ENCODE measurements at regions of chr9 and their contacts with region 1.

Region 1: GRCh38 chr9:121557581-121558447 is 58.2 kb upstream of the GGTA1 start:
- DNase-seq: peak; percentile 12
- H3K4me3 Mint-ChIP-seq: no peak overlapping the region
- H3K27ac Mint-ChIP-seq: no peak overlapping the region
- H3K4me1 Mint-ChIP-seq: peaks cover 3% of the 10 kb centered on the region
- H3K27me3 Mint-ChIP-seq: peaks cover 4% of the 10 kb centered on the region

Region 2: DNA sequence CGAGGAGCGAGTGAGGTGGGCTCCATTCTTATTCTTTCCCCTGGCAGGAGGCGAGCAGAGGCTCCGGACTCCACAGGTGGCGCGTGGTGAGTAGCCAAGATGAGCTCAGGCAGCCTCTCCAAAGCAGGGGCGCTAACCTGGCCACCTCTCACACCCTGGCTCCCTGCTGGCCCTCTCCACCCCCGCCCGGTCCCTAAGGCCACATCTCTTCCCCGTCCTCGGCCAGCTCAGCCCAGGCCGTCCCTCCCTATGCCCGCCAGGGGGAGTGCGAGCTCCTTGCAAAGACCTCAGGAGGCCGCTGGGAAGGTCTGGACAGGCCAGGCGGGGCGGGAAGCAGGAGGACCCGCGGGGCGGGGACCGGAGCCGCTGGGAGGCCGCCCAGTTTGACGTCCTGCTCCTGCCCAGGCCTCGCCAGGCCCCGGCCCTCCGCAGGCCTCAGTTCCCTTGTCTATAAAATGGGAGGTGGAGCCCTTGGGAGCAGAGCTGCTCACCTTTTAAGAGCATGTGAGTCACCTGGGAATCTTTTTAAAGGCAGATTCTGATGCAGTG is 11.9 kb before region 1 on chr9:
- CTCF ChIA-PET with region 1: interaction called, 20 read pairs
- intact Hi-C with region 1: no loop called
- DNase-seq: peak; percentile 80
- H3K4me3 Mint-ChIP-seq: no peak overlapping the region
- H3K27ac Mint-ChIP-seq: no peak overlapping the region
- H3K4me1 Mint-ChIP-seq: peaks cover under 1% of the 10 kb centered on the region
- H3K27me3 Mint-ChIP-seq: peaks cover 27% of the 10 kb centered on the region